GM13976 (cell line): ENCODE measurements at regions of chr3 and their contacts with region 1.

Region 1: GRCh38 chr3:119891944-119892721 is 110.2 kb downstream of the NR1I2 start:
- DNase-seq: peak; percentile 5
- CTCF ChIP-seq: peak; percentile 27

Region 2: GRCh38 chr3:120182724-120183524 is 290.8 kb after region 1 on chr3:
- in situ Hi-C with region 1: loop called (anchors 10 kb)
- DNase-seq: peak; percentile 30
- CTCF ChIP-seq: no peak